HepG2 (cell line): ENCODE measurements at regions of chr20 and their contacts with region 1.

Region 1: GRCh38 chr20:37265152-37265551 is 3.5 kb upstream of the GHRH start:
- DNase-seq: no peak
- ATAC-seq: no peak
- H3K4me3 ChIP-seq: no peak overlapping the region
- H3K27ac ChIP-seq: no peak overlapping the region
- H3K4me1 ChIP-seq: peaks cover 23% of the 10 kb centered on the region
- H3K27me3 ChIP-seq: peaks cover 9 to 46% of the 10 kb centered on the region in 2 experiments; a peak in 4 of 5 replicates
- CTCF ChIP-seq: no peak
- EP300 ChIP-seq: no peak
- POLR2A ChIP-seq: no peak
- RAD21 ChIP-seq: no peak

Region 2: DNA sequence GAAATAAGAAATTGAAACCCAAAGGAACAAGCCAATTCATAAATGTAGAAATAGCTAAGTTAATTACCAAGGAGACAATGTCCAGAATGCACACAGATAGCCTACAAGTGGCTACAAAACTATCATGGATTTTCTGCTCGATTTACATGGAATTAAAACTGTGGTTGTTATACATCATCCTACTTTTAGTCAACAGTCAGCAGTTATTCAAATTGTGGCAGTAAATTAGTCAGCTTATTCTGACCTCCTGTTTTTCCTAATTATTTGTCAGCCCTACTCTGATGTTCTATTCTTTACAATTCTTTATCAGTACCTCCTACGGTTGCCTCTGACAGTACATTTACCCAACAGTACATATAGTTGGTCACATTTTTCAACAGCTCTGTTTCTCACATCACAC is 199.0 kb before region 1 on chr20:
- CTCF ChIA-PET with region 1: no interaction called
- POLR2A ChIA-PET with region 1: no interaction called
- in situ Hi-C with region 1: no loop called
- intact Hi-C with region 1: no loop called
- DNase-seq: no peak
- ATAC-seq: no peak
- H3K4me3 ChIP-seq: no peak overlapping the region
- H3K27ac ChIP-seq: no peak overlapping the region
- H3K4me1 ChIP-seq: no peaks in the 10 kb centered on the region
- H3K27me3 ChIP-seq: no peaks in the 10 kb centered on the region
- CTCF ChIP-seq: no peak
- EP300 ChIP-seq: no peak
- POLR2A ChIP-seq: no peak
- RAD21 ChIP-seq: no peak

Region 3: GRCh38 chr20:37298190-37298939 is 33.2 kb after region 1 on chr20:
- CTCF ChIA-PET with region 1: no interaction called
- POLR2A ChIA-PET with region 1: no interaction called
- in situ Hi-C with region 1: no loop called
- intact Hi-C with region 1: loop called (anchors 2 kb)
- DNase-seq: no peak
- ATAC-seq: no peak
- H3K4me3 ChIP-seq: no peak overlapping the region
- H3K27ac ChIP-seq: no peak overlapping the region
- H3K4me1 ChIP-seq: peaks cover 27% of the 10 kb centered on the region
- H3K27me3 ChIP-seq: no peaks in the 10 kb centered on the region
- CTCF ChIP-seq: no peak
- EP300 ChIP-seq: no peak
- POLR2A ChIP-seq: no peak
- RAD21 ChIP-seq: no peak

Region 4: GRCh38 chr20:37396416-37397075 is 131.4 kb after region 1 on chr20:
- CTCF ChIA-PET with region 1: interaction called, 7 read pairs
- POLR2A ChIA-PET with region 1: no interaction called
- in situ Hi-C with region 1: no loop called
- intact Hi-C with region 1: loop called (anchors 5 kb)
- DNase-seq: no peak
- ATAC-seq: no peak
- H3K4me3 ChIP-seq: no peak overlapping the region
- H3K27ac ChIP-seq: peak overlapping the region; percentile 21
- H3K4me1 ChIP-seq: peaks cover 78% of the 10 kb centered on the region
- H3K27me3 ChIP-seq: no peaks in the 10 kb centered on the region
- CTCF ChIP-seq: no peak
- EP300 ChIP-seq: no peak
- POLR2A ChIP-seq: no peak
- RAD21 ChIP-seq: no peak